SK-N-SH (cell line): ENCODE measurements at regions of chr16 and their contacts with region 1.

Region 1: GRCh38 chr16:83826146-83826913 is 18.6 kb downstream of the HSBP1 start:
- DNase-seq: peak; percentile 86
- H3K4me3 ChIP-seq: peak overlapping the region in 1 of 2 experiments; percentile 2; a peak in 1 of 4 replicates
- H3K27ac ChIP-seq: no peak overlapping the region
- H3K4me1 ChIP-seq: no peaks in the 10 kb centered on the region; a peak in 1 of 4 replicates
- H3K27me3 ChIP-seq: no peaks in the 10 kb centered on the region; the same call in 1 of the 2 replicates
- CTCF ChIP-seq: peak; percentile 92
- EP300 ChIP-seq: no peak
- RAD21 ChIP-seq: peak; percentile 86

Region 2: DNA sequence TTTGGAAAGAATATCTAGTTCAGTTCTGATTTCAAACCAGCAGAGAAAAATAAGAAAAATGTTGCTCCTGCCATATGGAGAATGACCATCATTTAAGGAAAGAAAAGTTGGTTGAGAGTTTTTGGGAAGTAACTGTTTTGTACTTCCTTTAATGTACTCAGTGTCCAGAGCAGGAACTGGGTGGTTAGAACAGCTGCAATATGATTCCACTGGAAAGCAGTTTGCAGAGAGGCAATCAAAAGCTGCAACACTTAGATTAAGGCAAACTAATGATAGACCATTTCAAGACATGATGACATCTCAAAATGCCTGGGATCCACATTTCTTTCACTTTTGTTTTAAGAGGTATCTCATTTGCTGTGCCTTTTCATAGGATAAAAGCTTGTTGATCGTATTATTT is 331.9 kb before region 1 on chr16:
- CTCF ChIA-PET with region 1: no interaction called
- POLR2A ChIA-PET with region 1: no interaction called
- DNase-seq: no peak
- H3K4me3 ChIP-seq: no peak overlapping the region
- H3K27ac ChIP-seq: no peak overlapping the region
- H3K4me1 ChIP-seq: no peaks in the 10 kb centered on the region
- H3K27me3 ChIP-seq: no peaks in the 10 kb centered on the region
- CTCF ChIP-seq: no peak
- EP300 ChIP-seq: no peak
- RAD21 ChIP-seq: no peak

Region 3: GRCh38 chr16:83513008-83513755 is 313.1 kb before region 1 on chr16:
- CTCF ChIA-PET with region 1: no interaction called
- POLR2A ChIA-PET with region 1: no interaction called
- DNase-seq: no peak
- H3K4me3 ChIP-seq: no peak overlapping the region
- H3K27ac ChIP-seq: peak overlapping the region in 1 of 2 experiments; percentile 93; a peak in 2 of 4 replicates
- H3K4me1 ChIP-seq: no peaks in the 10 kb centered on the region
- H3K27me3 ChIP-seq: no peaks in the 10 kb centered on the region
- CTCF ChIP-seq: no peak
- EP300 ChIP-seq: peak in 1 of 2 experiments; percentile 26; a peak in 1 of 4 replicates
- RAD21 ChIP-seq: no peak

Region 4: GRCh38 chr16:83797013-83797412 is 29.3 kb before region 1 on chr16:
- CTCF ChIA-PET with region 1: no interaction called
- POLR2A ChIA-PET with region 1: no interaction called
- DNase-seq: no peak
- H3K4me3 ChIP-seq: no peak overlapping the region
- H3K27ac ChIP-seq: no peak overlapping the region
- H3K4me1 ChIP-seq: no peaks in the 10 kb centered on the region
- H3K27me3 ChIP-seq: no peaks in the 10 kb centered on the region
- CTCF ChIP-seq: no peak
- EP300 ChIP-seq: no peak
- RAD21 ChIP-seq: no peak

Region 5: GRCh38 chr16:83813823-83814658 is 12.3 kb before region 1 on chr16:
- CTCF ChIA-PET with region 1: interaction called, 32 read pairs
- POLR2A ChIA-PET with region 1: interaction called, 3 read pairs
- DNase-seq: no peak
- H3K4me3 ChIP-seq: no peak overlapping the region; a peak in 1 of 4 replicates
- H3K27ac ChIP-seq: peak overlapping the region; percentile 39 to 54; a peak in 3 of 4 replicates
- H3K4me1 ChIP-seq: peaks cover 8 to 9% of the 10 kb centered on the region in 2 experiments; a peak in 3 of 4 replicates
- H3K27me3 ChIP-seq: no peaks in the 10 kb centered on the region; the same call in 1 of the 2 replicates
- CTCF ChIP-seq: no peak
- EP300 ChIP-seq: no peak
- RAD21 ChIP-seq: no peak

Region 6: DNA sequence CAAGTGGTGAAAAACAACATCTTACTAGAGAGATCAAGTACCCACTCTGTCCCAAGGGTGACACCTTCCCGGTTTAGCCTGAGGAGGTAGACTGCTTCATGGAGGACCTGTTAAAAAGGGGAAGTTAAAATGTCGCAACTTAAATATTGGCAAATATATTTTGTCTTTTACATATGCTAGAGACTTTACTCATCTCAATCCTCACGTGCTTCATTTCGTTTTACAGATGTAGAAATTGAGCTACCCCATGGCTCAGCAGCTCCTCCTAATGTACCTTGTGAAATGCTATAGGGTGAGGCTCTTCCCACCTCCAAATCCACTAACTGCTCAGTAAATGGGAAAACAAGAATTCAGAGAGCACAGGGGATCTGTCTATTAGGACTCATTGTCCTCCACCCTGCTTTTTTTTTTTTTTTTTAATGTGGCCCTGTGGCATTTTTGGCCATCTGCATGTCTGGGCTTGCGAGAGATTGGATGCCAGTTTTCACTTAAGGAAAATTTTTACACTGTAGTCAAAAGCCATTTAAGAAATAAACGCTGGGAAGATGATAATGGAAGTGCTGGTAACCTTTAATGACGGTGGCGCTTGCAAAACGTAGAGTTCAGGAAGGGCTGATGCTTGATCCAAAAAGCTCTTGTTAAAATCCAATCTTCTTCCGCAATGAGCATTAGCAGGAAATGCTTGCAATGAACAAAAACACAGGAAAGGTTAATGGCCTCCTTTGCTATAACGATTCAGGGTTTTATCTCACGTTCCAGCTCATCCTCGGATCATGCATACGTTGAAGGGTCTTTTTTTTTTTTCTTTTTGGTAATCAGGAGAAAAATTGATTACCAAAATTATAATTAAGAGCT is 21.3 kb after region 1 on chr16:
- CTCF ChIA-PET with region 1: interaction called, 10 read pairs
- POLR2A ChIA-PET with region 1: no interaction called
- DNase-seq: peak; percentile 74
- H3K4me3 ChIP-seq: no peak overlapping the region
- H3K27ac ChIP-seq: peak overlapping the region in 1 of 2 experiments; percentile 72; a peak in 2 of 4 replicates
- H3K4me1 ChIP-seq: no peaks in the 10 kb centered on the region; a peak in 2 of 4 replicates
- H3K27me3 ChIP-seq: no peaks in the 10 kb centered on the region; the same call in 1 of the 2 replicates
- CTCF ChIP-seq: no peak
- EP300 ChIP-seq: no peak
- RAD21 ChIP-seq: no peak

Region 7: GRCh38 chr16:83878838-83879237 is 52.5 kb after region 1 on chr16:
- CTCF ChIA-PET with region 1: interaction called, 78 read pairs
- POLR2A ChIA-PET with region 1: no interaction called
- DNase-seq: peak; percentile 44
- H3K4me3 ChIP-seq: no peak overlapping the region
- H3K27ac ChIP-seq: no peak overlapping the region
- H3K4me1 ChIP-seq: no peaks in the 10 kb centered on the region
- H3K27me3 ChIP-seq: peaks cover 6% of the 10 kb centered on the region; the same call in 1 of the 2 replicates
- CTCF ChIP-seq: peak; percentile 81
- EP300 ChIP-seq: no peak
- RAD21 ChIP-seq: peak; percentile 83

Region 8: DNA sequence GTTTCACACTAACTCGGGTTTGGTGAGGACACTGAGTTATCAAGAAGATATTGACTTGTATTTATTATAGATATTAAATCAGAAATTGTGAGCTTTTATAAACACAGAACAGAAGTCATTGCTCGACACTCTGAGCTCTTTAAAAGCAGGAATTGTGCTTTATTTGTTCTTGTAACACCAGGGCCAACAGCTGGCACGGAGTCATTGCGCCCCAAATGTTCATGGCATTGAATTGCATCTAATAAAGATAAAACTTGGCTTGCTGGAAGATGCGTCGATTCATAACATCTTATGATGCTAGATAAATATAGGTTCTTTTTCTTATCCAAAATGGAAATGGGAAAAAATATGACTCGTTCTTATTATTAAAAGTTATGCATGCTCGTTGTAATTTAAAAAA is 60.8 kb after region 1 on chr16:
- CTCF ChIA-PET with region 1: interaction called, 78 read pairs
- POLR2A ChIA-PET with region 1: no interaction called
- DNase-seq: no peak
- H3K4me3 ChIP-seq: no peak overlapping the region
- H3K27ac ChIP-seq: no peak overlapping the region
- H3K4me1 ChIP-seq: no peaks in the 10 kb centered on the region; a peak in 1 of 4 replicates
- H3K27me3 ChIP-seq: no peaks in the 10 kb centered on the region; the same call in 1 of the 2 replicates
- CTCF ChIP-seq: peak; percentile 43
- EP300 ChIP-seq: no peak
- RAD21 ChIP-seq: peak; percentile 42; the same call in 1 of the 2 replicates